Activated naive CD4-positive, alpha-beta T cell treated with anti-CD3 and anti-CD28 coated beads for 36 hours (primary cell): ENCODE measurements at regions of chr14 and their contacts with region 1.

Region 1: GRCh38 chr14:24271134-24271833 is at the start of gene RABGGTA:
- DNase-seq: peak; percentile 94
- H3K4me3 Mint-ChIP-seq: peak within 1 kb of the TSS; percentile 78
- H3K27ac Mint-ChIP-seq: peak within 1 kb of the TSS; percentile 95
- H3K4me1 Mint-ChIP-seq: peaks cover 43% of the 10 kb centered on the region
- H3K27me3 Mint-ChIP-seq: no peaks in the 10 kb centered on the region
- total RNA-seq, gene RABGGTA: 74.9 to 76.2 TPM

Region 2: GRCh38 chr14:24141097-24141880 is 130.0 kb before region 1 on chr14 and contains the start of gene EMC9:
- CTCF ChIA-PET with region 1: no interaction called
- intact Hi-C with region 1: loop called (anchors 1 kb)
- DNase-seq: peak; percentile 100
- H3K4me3 Mint-ChIP-seq: peak within 1 kb of the TSS; percentile 99
- H3K27ac Mint-ChIP-seq: peak within 1 kb of the TSS; percentile 93
- H3K4me1 Mint-ChIP-seq: peaks cover 73% of the 10 kb centered on the region
- H3K27me3 Mint-ChIP-seq: no peaks in the 10 kb centered on the region
- total RNA-seq, gene EMC9: 38.4 to 38.9 TPM

Region 3: GRCh38 chr14:24215495-24216344 is 55.6 kb before region 1 on chr14 and contains the start of gene MDP1:
- CTCF ChIA-PET with region 1: interaction called, 3 read pairs
- intact Hi-C with region 1: loop called (anchors 1 kb)
- DNase-seq: peak; percentile 93
- H3K4me3 Mint-ChIP-seq: peak within 1 kb of the TSS; percentile 86
- H3K27ac Mint-ChIP-seq: peak within 1 kb of the TSS; percentile 96
- H3K4me1 Mint-ChIP-seq: peaks cover 45% of the 10 kb centered on the region
- H3K27me3 Mint-ChIP-seq: no peaks in the 10 kb centered on the region
- total RNA-seq, gene MDP1: 10.2 to 13.6 TPM

Region 4: DNA sequence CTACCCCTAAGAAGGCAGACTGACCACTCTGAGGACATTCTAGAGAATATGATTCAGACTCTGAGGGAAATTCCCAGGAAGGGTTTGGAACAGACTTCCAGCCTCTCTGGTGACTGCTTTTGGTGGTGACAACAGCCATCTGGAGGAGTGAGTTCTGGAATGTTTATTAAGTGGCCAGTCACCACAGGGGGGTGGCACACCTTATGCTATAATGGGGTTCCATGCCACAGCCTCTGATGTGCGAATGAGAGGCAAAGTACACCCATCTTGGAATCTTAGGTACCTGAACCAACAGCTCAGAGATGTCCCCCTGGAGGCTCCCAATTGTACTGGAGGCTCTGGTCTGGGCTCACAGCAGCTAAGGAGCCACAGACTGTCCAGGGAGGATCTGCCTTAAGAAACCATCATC is 19.4 kb before region 1 on chr14:
- CTCF ChIA-PET with region 1: interaction called, 31 read pairs
- intact Hi-C with region 1: no loop called
- DNase-seq: no peak
- H3K4me3 Mint-ChIP-seq: no peak overlapping the region
- H3K27ac Mint-ChIP-seq: no peak overlapping the region
- H3K4me1 Mint-ChIP-seq: peaks cover 25% of the 10 kb centered on the region
- H3K27me3 Mint-ChIP-seq: no peaks in the 10 kb centered on the region

Region 5: DNA sequence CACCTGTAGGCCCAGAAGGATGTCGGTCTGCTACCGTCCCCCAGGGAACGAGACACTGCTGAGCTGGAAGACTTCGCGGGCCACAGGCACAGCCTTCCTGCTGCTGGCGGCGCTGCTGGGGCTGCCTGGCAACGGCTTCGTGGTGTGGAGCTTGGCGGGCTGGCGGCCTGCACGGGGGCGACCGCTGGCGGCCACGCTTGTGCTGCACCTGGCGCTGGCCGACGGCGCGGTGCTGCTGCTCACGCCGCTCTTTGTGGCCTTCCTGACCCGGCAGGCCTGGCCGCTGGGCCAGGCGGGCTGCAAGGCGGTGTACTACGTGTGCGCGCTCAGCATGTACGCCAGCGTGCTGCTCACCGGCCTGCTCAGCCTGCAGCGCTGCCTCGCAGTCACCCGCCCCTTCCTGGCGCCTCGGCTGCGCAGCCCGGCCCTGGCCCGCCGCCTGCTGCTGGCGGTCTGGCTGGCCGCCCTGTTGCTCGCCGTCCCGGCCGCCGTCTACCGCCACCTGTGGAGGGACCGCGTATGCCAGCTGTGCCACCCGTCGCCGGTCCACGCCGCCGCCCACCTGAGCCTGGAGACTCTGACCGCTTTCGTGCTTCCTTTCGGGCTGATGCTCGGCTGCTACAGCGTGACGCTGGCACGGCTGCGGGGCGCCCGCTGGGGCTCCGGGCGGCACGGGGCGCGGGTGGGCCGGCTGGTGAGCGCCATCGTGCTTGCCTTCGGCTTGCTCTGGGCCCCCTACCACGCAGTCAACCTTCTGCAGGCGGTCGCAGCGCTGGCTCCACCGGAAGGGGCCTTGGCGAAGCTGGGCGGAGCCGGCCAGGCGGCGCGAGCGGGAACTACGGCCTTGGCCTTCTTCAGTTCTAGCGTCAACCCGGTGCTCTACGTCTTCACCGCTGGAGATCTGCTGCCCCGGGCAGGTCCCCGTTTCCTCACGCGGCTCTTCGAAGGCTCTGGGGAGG is 39.6 kb after region 1 on chr14 and contains the start of gene LTB4R:
- CTCF ChIA-PET with region 1: interaction called, 8 read pairs
- intact Hi-C with region 1: loop called (anchors 1 kb)
- DNase-seq: peak; percentile 71
- H3K4me3 Mint-ChIP-seq: peak within 1 kb of the TSS; percentile 71
- H3K27ac Mint-ChIP-seq: peak within 1 kb of the TSS; percentile 68
- H3K4me1 Mint-ChIP-seq: peaks cover 64% of the 10 kb centered on the region
- H3K27me3 Mint-ChIP-seq: no peaks in the 10 kb centered on the region
- total RNA-seq, gene LTB4R: 10.6 to 11.4 TPM

Region 6: DNA sequence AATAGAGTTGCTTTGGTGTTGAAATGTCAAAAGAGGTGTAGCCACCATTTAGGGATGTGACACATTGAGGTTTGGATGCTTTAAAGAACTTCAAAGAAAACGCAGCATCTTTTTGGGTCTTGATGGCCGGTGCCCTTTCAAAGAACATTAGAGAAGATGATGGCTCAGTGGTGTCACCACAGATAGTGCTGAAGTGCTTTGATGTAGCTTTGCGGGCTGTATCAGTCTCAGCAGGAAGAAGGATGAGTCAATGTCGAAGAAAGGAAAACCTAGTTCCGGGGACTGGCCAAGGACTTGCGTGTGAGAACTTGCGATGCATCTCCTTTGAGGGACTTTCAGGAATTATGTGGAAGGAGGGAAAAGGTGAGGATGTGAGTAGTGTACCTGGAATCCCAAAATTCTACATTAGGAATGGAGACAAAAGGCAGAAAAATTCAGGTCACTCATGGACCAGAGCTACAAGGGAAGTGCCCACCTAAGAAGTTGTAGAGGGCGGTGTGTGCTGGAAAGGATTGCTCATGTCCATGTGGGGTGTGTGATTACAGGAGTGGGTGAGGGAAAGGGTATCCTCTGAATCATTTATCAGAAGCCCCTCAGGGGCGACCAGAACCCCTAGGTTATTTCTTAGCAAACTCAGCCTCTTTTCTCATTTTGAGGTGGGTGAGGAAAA is 402.4 kb after region 1 on chr14:
- CTCF ChIA-PET with region 1: no interaction called
- intact Hi-C with region 1: loop called (anchors 5 kb)
- DNase-seq: peak; percentile 87
- H3K4me3 Mint-ChIP-seq: peak overlapping the region; percentile 60
- H3K27ac Mint-ChIP-seq: peak overlapping the region; percentile 96
- H3K4me1 Mint-ChIP-seq: peaks cover 80% of the 10 kb centered on the region
- H3K27me3 Mint-ChIP-seq: no peaks in the 10 kb centered on the region

Region 7: DNA sequence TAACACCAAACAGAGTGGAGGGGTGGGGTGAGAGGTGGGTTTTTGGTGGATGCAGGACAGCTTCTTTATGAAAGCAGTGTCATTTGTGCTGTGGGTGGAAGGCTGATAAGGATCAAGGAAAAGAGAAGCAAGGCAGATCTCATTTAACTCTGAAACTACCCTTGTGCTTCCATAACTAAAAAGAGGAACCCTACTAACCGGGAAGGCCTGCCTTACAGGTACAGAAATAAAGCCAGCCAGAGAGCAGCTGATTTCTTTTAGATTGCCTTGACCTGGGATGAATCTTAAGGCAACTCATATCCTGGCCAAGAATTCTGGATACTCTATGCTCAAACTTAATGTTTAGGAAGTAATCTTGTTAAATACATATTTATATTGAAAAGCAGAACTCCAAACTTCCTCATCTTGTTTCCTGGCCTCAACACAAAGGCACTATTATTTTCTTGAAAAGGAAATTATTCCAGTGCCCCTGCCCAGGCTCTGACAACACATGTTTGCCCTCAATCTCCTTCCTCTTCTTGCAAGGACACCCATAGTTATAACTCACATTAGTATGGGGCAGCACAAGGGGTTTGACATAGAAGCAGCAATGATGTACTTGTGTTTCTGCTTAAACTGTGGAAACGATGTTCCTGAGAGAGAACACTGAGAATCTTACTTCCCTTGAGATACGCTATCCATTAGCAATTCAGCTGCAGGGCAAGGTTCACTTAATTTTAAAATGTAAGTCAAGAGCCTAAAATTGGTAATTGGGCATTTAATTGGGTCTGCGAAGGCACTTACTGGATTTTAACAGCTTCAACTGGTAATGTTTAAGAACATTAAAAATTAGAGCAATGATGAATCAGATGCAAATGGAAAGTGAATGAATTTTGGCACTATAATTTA is 605.0 kb after region 1 on chr14:
- CTCF ChIA-PET with region 1: no interaction called
- intact Hi-C with region 1: no loop called
- DNase-seq: no peak
- H3K4me3 Mint-ChIP-seq: no peak overlapping the region
- H3K27ac Mint-ChIP-seq: no peak overlapping the region
- H3K4me1 Mint-ChIP-seq: no peaks in the 10 kb centered on the region
- H3K27me3 Mint-ChIP-seq: peaks cover 8% of the 10 kb centered on the region